IMR-90 (cell line): ENCODE measurements at regions of chrX and their contacts with region 1.

Region 1: DNA sequence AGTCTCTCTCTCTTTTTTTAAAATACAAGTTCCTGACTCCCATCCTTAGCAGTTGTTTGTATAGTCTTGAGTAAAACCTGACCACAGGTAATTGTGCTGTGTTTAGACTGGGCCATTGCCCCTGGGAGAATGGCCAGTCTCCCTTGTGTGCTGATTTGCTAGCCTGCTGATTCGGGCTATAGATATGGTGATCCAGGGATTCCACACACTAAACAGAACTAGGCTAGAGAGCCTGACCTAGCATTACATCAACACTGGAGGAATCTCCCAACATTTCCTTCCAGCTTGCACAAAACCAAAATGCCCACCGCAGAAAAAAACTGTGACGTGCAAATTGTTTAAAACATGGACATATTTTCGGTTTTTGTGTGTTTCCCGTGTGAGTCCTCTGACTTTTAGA is 5.1 kb downstream of the UPRT start:
- DNase-seq: no peak
- ATAC-seq: no peak
- H3K4me3 ChIP-seq: no peak overlapping the region
- H3K27ac ChIP-seq: no peak overlapping the region
- H3K4me1 ChIP-seq: no peaks in the 10 kb centered on the region
- H3K27me3 ChIP-seq: no peaks in the 10 kb centered on the region
- CTCF ChIP-seq: no peak
- POLR2A ChIP-seq: no peak
- RAD21 ChIP-seq: no peak

Region 2: GRCh38 chrX:74924449-74925225 is 354.4 kb before region 1 on chrX:
- CTCF ChIA-PET with region 1: no interaction called
- POLR2A ChIA-PET with region 1: no interaction called
- dilution Hi-C with region 1: no loop called
- in situ Hi-C with region 1: no loop called
- intact Hi-C with region 1: loop called (anchors 5 kb)
- DNase-seq: no peak
- ATAC-seq: peak; percentile 70
- H3K4me3 ChIP-seq: peak overlapping the region; percentile 9; the same call in 1 of the 2 replicates
- H3K27ac ChIP-seq: no peak overlapping the region
- H3K4me1 ChIP-seq: no peaks in the 10 kb centered on the region
- H3K27me3 ChIP-seq: peaks cover 12% of the 10 kb centered on the region
- CTCF ChIP-seq: no peak
- POLR2A ChIP-seq: no peak
- RAD21 ChIP-seq: no peak

Region 3: GRCh38 chrX:75301060-75301459 is 22.1 kb after region 1 on chrX:
- CTCF ChIA-PET with region 1: no interaction called
- POLR2A ChIA-PET with region 1: no interaction called
- dilution Hi-C with region 1: no loop called
- in situ Hi-C with region 1: no loop called
- intact Hi-C with region 1: loop called (anchors 1 kb)
- DNase-seq: peak; percentile 8
- ATAC-seq: peak; percentile 40; the same call in 1 of the 2 replicates
- H3K4me3 ChIP-seq: no peak overlapping the region
- H3K27ac ChIP-seq: no peak overlapping the region
- H3K4me1 ChIP-seq: no peaks in the 10 kb centered on the region
- H3K27me3 ChIP-seq: 0 out of 2 replicates have a peak, but pooled peaks cover 1% of the 10 kb centered on the region
- CTCF ChIP-seq: no peak
- POLR2A ChIP-seq: no peak
- RAD21 ChIP-seq: no peak